ENCODE measurements at regions of chr17 and their contacts with region 1.

Region 1: DNA sequence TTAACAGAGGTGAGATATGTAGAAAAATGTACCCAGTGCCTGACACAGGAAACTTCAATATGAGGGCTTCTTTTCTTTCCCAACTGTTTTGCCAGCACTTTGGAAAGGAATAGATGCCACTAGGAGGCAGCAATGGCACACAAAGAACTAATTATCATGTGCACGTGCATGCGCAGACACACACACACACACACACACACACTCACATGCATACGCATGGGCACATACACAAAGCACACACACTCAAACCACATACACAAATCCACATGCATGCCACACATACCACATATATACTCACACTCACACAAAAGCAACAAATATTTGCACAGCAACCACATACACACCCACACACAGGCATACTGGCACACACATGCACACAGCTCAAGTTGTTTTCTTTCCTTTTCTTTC is 8.8 kb upstream of the CEP112 start:
- DNase-seq: peak; percentile 25
- H3K4me3 Mint-ChIP-seq: no peak overlapping the region
- H3K27ac Mint-ChIP-seq: no peak overlapping the region
- H3K4me1 Mint-ChIP-seq: peaks cover 12% of the 10 kb centered on the region
- H3K27me3 Mint-ChIP-seq: peaks cover 2% of the 10 kb centered on the region

Region 2: GRCh38 chr17:66426397-66427033 is 225.8 kb after region 1 on chr17:
- intact Hi-C with region 1: no loop called
- DNase-seq: peak; percentile 40
- H3K4me3 Mint-ChIP-seq: peak overlapping the region; percentile 14
- H3K27ac Mint-ChIP-seq: peak overlapping the region; percentile 62
- H3K4me1 Mint-ChIP-seq: peaks cover 70% of the 10 kb centered on the region
- H3K27me3 Mint-ChIP-seq: no peaks in the 10 kb centered on the region

Region 3: GRCh38 chr17:66567234-66568170 is 366.8 kb after region 1 on chr17:
- intact Hi-C with region 1: loop called (anchors 5 kb)
- DNase-seq: peak; percentile 61
- H3K4me3 Mint-ChIP-seq: no peak overlapping the region
- H3K27ac Mint-ChIP-seq: peak overlapping the region; percentile 59
- H3K4me1 Mint-ChIP-seq: peaks cover 27% of the 10 kb centered on the region
- H3K27me3 Mint-ChIP-seq: no peaks in the 10 kb centered on the region

Region 4: DNA sequence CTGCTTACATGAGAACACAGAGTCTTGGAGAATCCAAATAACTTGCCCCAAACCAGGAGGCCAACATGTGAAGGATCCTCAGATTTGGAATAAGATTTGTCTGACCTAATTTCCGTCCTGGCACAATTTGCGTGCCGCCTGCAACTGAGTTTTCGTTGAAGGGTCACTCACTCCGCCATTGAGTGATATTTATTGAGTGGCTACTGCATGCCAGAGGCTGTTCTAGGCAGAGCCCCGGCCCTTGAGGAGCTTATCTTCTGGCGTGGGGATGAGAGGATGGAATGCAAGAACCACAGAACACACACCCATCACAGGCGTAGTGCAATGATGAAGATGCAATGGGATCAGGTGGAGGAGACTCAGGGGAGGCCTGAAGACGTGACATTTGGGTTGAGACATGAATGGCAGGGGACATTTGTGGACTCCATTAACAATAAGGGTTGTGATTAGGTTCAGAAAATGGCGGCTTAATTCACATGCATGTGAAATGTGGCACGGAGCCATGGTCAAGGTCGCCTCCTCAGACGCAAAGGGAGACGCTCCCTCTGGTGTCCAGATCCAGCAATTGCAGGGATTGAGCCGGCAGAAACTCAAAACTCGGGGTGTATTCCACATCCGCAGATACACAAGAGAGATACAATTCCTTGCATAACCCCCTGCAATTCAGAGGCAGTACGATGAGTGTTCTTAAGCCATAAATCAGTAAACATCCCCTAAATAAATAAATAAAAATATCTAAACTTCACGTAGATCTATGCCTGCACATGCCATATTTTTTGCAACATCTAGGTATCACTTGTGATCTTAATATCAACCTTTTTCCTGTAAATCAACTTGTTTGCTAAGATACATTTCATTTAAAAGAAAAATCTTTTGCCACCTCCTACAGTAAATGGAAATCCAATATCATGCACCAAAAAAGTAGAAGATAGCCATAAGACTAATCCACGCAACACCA is 705.9 kb after region 1 on chr17:
- intact Hi-C with region 1: loop called (anchors 2 kb)
- DNase-seq: peak; percentile 46
- H3K4me3 Mint-ChIP-seq: no peak overlapping the region
- H3K27ac Mint-ChIP-seq: no peak overlapping the region
- H3K4me1 Mint-ChIP-seq: peaks cover 5% of the 10 kb centered on the region
- H3K27me3 Mint-ChIP-seq: peaks cover 6% of the 10 kb centered on the region